HCT116 (cell line): ENCODE measurements at regions of chr14 and their contacts with region 1.

Region 1: GRCh38 chr14:69535230-69535848 is 39.3 kb downstream of the CCDC177 start:
- DNase-seq: peak; percentile 42
- ATAC-seq: peak; percentile 96
- H3K4me3 ChIP-seq: no peak overlapping the region
- H3K27ac ChIP-seq: no peak overlapping the region
- H3K4me1 ChIP-seq: peaks cover 0 to 12% of the 10 kb centered on the region in 2 experiments; a peak in 2 of 4 replicates
- H3K27me3 ChIP-seq: no peaks in the 10 kb centered on the region
- CTCF ChIP-seq: peak; percentile 73 to 85 (median 80); a peak in 5 of 6 replicates
- POLR2A ChIP-seq: no peak
- RAD21 ChIP-seq: peak; percentile 77

Region 2: DNA sequence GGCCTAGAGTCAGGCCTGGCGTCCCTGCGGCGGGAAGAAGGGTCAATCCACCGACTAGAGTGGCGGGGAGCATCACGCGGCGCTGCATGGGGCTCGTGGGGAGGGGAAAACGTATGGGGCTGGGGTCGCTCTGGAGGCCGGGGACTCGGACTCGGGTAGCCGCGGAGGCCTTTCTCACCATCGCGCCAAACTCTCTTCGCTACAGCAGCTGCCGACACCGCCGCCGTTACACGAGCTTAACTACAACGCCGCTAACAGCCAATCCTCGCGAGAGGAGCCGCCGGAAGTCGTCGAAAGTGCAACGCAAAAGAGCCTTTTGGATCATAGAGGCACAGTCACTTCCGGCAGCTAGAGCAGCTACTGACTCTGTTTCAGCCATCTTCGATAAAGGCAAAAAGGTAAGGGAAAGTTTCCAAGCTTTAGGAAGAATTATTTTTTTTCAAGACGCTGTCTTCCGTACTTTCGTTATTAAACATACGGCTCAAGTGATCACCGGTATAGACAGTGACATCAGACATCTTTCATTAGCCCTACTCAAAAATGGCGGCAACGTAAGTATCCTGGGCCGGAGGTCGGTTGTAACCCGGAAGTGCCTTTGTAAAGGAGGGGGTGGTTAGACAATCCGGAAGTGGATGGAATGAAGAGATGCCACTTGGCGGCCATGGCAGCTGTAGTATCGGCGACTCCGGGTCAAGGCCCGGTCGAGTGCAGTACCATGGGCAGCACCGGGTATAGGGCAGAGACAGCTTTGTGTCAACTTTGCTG is 137.1 kb before region 1 on chr14 and contains the starts of genes ERH and SLC39A9:
- CTCF ChIA-PET with region 1: no interaction called
- POLR2A ChIA-PET with region 1: no interaction called
- RAD21 ChIA-PET with region 1: no interaction called
- intact Hi-C with region 1: no loop called
- DNase-seq: peak; percentile 95
- ATAC-seq: peak; percentile 91
- H3K4me3 ChIP-seq: peak within 1 kb of the TSS; percentile 94 to 95
- H3K27ac ChIP-seq: peak within 1 kb of the TSS; percentile 91
- H3K4me1 ChIP-seq: peaks cover 15 to 19% of the 10 kb centered on the region in 2 experiments; a peak in 3 of 4 replicates
- H3K27me3 ChIP-seq: no peaks in the 10 kb centered on the region
- CTCF ChIP-seq: no peak
- POLR2A ChIP-seq: peak; percentile 87
- RAD21 ChIP-seq: no peak
- total RNA-seq, gene ERH: 352 TPM
- total RNA-seq, gene SLC39A9: 80.2 TPM

Region 3: DNA sequence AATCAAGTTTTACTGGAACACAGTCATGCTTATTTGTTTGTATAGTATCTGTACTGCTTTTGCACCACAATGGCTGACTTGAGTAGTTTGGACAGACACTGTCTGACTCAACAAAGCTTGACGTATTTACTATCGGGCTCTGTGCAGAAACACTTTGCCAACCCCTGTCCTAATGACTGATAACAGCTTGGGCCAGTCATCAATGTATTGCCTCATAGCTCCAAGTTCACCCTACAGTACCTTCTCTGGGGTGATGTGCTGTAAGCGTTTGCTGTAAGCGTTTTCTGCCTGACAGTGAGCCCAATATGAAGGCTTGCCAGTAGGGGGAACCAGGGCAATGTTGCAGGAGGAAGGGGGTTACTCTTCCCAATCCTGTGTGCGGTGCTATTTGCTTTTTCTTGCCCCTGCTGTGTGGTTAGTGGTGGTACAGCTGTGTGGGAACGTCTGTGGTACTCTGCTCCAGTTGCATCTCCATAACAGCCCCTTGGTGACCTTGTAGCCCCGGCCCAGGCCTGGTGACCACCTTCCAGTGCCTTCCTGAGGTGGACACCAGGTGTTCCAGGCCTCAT is 44.8 kb after region 1 on chr14:
- CTCF ChIA-PET with region 1: interaction called, 27 read pairs
- POLR2A ChIA-PET with region 1: no interaction called
- RAD21 ChIA-PET with region 1: no interaction called
- intact Hi-C with region 1: no loop called
- DNase-seq: peak; percentile 37
- ATAC-seq: peak; percentile 87
- H3K4me3 ChIP-seq: no peak overlapping the region
- H3K27ac ChIP-seq: no peak overlapping the region
- H3K4me1 ChIP-seq: no peaks in the 10 kb centered on the region
- H3K27me3 ChIP-seq: no peaks in the 10 kb centered on the region
- CTCF ChIP-seq: peak; percentile 52 to 80 (median 69); a peak in 5 of 6 replicates
- POLR2A ChIP-seq: no peak
- RAD21 ChIP-seq: peak; percentile 49